Activated CD8-positive, alpha-beta T cell treated with anti-CD3 and anti-CD28 coated beads, Interleukin-2, amount 10 ng/mL, durations not matched to agents 7 days and 5 days (primary cell): ENCODE measurements at regions of chr1 and their contacts with region 1.

Region 1: DNA sequence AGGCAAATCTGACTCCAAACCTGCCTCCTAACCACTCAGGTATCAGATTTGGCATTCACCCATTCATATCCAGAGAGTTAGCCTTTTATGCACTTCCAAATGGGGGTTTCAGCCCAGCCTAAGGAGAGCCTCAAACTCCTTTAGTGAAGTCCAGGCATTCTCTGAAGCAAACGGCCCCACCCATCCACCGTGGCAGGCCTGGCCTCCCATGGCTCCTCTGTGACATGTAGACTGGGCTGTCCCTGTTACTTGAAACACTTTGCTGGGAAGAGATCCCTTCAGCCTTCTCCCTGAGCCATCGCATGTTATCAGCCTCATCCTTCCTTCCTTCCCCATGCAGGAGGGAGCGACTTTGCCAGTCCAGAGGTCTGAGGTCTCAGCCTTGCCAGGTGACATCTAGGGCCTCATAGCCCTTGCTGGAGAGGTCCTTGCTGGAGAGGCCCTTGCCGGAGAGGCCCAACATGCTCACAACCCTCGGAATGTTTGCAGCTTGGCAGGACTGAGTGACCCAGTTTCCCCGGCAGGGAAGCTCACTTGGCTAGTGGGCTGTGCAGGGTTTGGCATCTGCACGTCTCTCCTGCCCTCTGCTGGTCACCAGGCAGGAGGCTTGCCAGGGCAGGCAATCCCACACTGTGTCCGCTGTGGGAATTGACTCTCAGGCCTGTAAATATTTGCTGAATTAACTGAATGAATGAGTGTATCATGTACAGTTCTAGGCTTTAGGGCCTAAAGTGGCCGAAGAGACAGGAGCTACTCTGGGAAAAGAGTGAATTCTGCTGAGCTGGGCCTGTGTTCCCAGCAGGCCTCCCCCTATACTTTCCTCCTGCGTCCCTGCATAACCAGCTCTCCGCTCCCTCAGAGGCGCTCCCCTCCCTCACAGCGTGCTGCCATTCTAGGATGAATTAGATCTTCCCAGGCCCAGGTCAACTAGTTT is 26.7 kb upstream of the RBM15 start:
- DNase-seq: peak; percentile 76
- ATAC-seq: peak; percentile 97
- H3K4me3 Mint-ChIP-seq: no peak overlapping the region
- H3K27ac Mint-ChIP-seq: no peak overlapping the region
- H3K4me1 Mint-ChIP-seq: no peaks in the 10 kb centered on the region
- H3K27me3 Mint-ChIP-seq: no peaks in the 10 kb centered on the region

Region 2: GRCh38 chr1:110196917-110197765 is 115.3 kb before region 1 on chr1:
- CTCF ChIA-PET with region 1: interaction called, 460 read pairs
- POLR2A ChIA-PET with region 1: no interaction called
- DNase-seq: peak; percentile 66
- ATAC-seq: peak; percentile 87
- H3K4me3 Mint-ChIP-seq: no peak overlapping the region
- H3K27ac Mint-ChIP-seq: no peak overlapping the region
- H3K4me1 Mint-ChIP-seq: peaks cover 2% of the 10 kb centered on the region
- H3K27me3 Mint-ChIP-seq: no peaks in the 10 kb centered on the region

Region 3: DNA sequence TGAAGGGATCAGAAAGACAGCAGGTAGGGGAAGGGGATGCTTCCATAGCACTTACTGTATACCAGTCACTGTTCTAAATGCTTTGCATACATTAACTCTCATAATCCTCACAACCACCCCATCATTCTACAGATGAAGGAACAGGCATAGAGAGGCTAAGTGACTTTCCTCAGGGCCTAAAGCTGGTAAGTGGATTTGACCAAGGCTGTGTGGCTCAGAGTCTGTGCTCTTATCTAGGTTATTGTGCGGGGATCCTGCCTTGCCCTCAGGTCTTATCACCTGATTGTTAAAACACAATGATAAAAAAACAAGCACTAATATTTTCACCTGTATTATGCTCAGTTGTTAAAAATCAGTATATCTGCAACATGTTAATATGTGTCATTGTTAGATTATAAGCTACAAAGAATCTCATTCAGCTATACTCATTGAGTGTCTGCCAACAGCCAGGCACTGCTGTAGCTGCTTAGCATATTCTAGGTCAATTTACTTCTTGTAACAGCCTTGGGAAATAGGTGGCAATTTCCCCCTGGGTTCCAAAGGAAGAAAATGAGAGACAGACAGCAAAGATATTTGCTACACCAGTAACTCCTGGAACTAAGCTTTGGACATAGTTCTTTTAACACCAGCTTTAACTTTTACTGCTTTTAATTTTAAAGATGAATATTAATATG is 11.9 kb before region 1 on chr1:
- CTCF ChIA-PET with region 1: interaction called, 10 read pairs
- POLR2A ChIA-PET with region 1: no interaction called
- DNase-seq: no peak
- ATAC-seq: no peak
- H3K4me3 Mint-ChIP-seq: no peak overlapping the region
- H3K27ac Mint-ChIP-seq: no peak overlapping the region
- H3K4me1 Mint-ChIP-seq: no peaks in the 10 kb centered on the region
- H3K27me3 Mint-ChIP-seq: peaks cover 7% of the 10 kb centered on the region

Region 4: GRCh38 chr1:110508038-110508940 is 195.8 kb after region 1 on chr1:
- CTCF ChIA-PET with region 1: no interaction called
- POLR2A ChIA-PET with region 1: no interaction called
- DNase-seq: no peak
- ATAC-seq: no peak
- H3K4me3 Mint-ChIP-seq: no peak overlapping the region
- H3K27ac Mint-ChIP-seq: no peak overlapping the region
- H3K4me1 Mint-ChIP-seq: no peaks in the 10 kb centered on the region
- H3K27me3 Mint-ChIP-seq: peaks cover 5% of the 10 kb centered on the region